ENCODE measurements at regions of chr12 and their contacts with region 1.

Region 1: GRCh38 chr12:56448860-56449621 is at the start of gene TIMELESS:
- DNase-seq: peak; percentile 90
- H3K4me3 Mint-ChIP-seq: peak within 1 kb of the TSS; percentile 76
- H3K27ac Mint-ChIP-seq: peak within 1 kb of the TSS; percentile 90
- H3K4me1 Mint-ChIP-seq: peaks cover 8% of the 10 kb centered on the region
- H3K27me3 Mint-ChIP-seq: no peaks in the 10 kb centered on the region
- CTCF ChIP-seq: no peak
- total RNA-seq, gene TIMELESS: 10.1 and 14.0 TPM in 2 replicates

Region 2: DNA sequence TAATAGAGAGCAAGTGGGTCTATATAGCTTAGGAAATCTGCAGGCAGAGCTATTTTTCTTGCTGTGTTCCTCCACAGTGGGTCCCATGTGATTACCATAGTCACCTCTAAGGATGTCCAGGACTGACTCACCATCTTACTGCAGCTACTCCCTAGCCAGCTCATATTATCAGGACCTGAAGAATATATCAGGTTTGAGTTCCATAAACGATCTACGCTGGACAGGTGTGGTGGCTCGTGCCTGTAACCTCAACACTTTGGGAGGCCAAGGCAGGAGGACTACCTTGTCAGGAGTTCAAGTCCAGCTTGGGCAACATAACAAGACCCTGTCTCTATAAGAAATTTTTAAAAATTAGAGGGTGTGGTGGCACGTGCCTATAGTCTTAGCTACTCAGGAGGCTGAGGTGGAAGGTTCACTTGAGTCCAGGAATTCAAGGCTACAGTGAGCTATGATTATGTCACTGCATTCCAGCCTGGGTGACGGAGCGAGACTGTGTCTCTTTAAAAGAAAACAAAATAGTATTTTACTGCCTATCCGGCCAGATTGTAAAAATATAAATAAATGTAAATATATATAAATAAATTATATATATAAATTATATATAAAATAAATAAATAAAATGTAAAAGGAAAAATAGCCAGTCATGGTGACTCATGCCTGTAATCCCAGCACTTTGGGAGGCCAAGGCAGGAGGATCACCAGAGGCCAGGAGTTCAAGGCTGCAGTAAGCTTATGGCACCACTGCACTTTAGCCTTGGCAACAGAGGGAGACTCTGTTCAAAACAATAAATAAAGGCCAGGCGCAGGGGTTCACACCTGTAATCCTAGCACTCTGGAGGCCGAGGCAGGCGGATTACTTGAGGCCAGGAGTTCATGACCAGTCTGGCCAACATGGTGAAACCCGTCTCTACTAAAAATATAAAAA is 12.5 kb after region 1 on chr12:
- CTCF ChIA-PET with region 1: interaction called, 20 read pairs
- POLR2A ChIA-PET with region 1: interaction called, 43 read pairs
- intact Hi-C with region 1: no loop called
- DNase-seq: no peak
- H3K4me3 Mint-ChIP-seq: no peak overlapping the region
- H3K27ac Mint-ChIP-seq: no peak overlapping the region
- H3K4me1 Mint-ChIP-seq: peaks cover 6% of the 10 kb centered on the region
- H3K27me3 Mint-ChIP-seq: no peaks in the 10 kb centered on the region
- CTCF ChIP-seq: no peak